ENCODE measurements at regions of chr17 and their contacts with region 1.

Region 1: DNA sequence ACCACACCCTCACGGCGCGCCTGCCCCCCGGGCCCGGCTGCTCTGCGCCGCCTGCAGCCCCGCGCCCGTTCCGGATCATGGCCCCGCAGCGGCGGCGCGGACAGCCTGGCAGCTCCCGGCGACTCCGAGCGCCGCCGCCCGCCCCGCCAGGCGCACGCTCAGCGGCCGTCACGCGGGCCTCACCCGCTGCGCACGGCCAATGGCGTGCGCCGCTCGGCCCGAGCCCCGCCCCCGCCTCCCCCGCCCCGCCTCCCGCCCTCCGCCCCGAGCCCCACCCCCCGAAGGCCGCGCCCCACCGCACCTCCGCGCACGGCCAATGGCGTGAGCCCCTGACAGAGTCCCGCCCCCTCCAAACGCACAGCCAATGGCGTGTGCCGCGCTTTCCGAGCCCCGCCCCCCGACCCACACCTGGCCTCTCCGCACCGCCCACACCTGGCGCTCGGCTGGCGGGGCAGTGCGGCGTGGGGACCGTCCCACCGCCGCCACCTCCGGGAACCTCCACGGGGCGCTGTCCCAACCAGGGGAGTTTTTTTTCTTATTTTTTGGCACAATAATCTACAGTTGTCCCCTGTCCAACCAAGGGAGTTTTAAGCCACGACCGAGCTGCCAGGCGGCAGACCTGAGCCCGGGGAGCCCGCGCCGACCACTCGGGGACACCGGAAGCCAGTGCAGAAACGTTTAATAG is at the start of gene PCYT2:
- DNase-seq: peak; percentile 96
- total RNA-seq, gene PCYT2: 8.7 to 14.9 TPM

Region 2: GRCh38 chr17:81064678-81065475 is 846.5 kb before region 1 on chr17:
- intact Hi-C with region 1: loop called in 1 of 2 experiments (anchors 5 kb)
- DNase-seq: no peak

Region 3: DNA sequence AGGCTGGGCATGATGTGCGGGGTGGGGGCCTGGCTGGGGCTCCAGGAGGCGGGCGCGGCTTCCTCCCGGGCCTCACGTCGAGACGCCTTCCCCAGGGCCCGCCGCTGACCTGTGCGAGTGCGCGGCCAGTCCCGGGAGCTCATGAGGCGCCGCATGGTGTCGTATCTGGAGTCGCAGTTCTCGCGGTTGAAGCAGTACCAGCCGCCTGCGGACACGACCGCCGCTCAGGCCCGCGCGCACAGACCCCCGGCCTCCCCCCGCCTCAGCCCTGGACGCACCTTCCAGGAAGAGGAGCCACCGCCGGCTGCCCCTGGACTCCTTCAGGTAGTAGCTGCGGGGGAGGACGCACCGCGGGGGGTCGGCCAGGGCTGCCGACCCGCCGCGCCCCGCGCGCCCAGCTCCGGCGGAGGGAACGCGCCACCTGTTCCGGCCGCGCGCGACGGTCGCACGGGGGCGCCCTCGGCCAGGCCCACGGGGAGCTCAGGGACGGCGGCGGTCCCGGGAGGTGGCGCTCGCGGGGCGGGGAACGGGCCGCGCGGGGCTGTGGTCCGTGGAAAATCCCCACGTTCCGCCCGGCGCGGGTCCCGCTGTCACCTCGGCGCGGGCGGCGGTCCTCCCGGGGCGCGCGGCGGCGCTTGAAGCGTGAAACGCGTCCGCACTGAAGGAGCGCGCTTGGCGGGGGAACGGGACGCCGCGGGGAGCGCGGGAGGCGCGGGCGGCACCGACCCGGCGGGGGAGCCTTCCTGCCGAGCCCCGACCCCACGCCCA is 48.1 kb after region 1 on chr17:
- intact Hi-C with region 1: no loop called
- DNase-seq: peak; percentile 89

Region 4: DNA sequence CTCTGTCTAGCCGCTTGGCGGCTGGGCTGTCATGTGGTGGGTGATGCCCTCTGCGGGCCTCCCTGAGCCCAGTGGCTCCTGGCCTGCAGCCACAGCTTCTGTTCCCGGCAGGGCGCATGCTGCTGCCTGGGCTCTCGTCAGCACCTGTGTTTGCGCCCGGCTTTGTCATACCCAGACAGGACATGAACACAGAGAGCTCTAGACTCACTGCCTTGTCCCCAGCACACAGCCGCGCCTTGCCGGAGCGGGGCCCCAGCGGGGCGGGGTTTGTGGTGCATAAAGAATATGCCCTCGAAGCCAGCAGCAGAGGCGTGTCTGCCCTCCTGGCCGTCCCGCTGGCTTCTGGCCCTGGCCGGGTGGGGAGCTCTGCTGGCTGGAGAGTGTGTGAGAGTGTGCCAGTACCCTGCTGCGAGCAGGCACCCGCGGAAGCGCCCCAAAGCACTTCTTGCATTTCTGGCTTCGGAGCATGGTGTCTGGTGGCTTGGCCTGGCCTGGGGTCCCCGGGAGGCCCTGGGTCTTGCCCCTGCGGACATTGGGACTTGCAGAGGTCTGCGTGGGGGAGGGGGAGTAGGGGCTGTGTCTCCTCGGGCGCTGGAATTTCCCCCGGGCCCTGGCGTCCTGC is 80.4 kb after region 1 on chr17:
- intact Hi-C with region 1: loop called in 1 of 2 experiments (anchors 2 kb)
- DNase-seq: no peak